ENCODE measurements at regions of chr20 and their contacts with region 1.

Region 1: DNA sequence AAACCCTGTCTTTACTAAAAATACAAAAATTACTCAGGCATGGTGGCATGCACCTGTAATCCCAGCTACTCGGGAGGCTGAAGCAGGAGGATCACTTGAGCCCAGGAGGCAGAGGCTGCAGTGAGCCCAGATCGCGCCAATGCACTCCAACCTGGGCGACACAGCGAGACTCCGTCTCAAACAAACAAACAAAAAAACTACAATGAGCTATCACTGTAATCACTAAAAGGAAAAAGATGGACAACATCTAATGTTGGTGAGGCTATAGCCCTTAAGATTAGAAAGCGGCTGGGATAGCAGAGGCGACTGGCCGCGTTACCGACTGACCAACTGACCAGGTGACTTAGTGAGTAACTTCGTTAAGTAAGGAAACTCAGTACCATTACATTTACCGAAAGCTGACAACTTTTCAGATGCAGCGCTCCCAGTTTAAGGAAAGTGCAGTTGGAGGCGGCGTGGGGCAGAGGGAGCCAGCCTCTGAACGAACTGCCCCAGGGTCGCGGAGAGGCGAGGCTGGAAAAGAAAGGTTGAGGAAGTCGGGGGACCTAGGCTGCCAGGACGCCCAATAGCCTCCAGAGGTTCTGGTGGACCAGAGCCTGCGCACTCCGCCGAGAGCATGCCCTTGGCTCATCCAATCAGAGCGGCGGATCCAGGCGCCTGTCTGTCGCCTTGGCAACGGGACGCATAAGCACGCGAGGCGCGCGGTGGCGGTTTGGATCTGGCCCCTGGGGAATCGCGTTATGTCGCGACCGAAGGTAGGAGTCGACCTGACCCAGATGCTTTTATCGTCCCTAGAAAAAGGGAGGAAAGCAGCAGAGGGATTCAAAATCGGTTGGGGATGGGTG is 8.9 kb downstream of the TTLL9 start:
- DNase-seq: peak; percentile 53 to 93 (median 66)
- ATAC-seq: peak; percentile 88
- H3K4me3 ChIP-seq: peak overlapping the region; percentile 69
- H3K4me3 Mint-ChIP-seq: peak overlapping the region; percentile 92
- H3K27ac ChIP-seq: no peak overlapping the region
- H3K27ac Mint-ChIP-seq: peak overlapping the region; percentile 48
- H3K4me1 ChIP-seq: peaks cover 15% of the 10 kb centered on the region
- H3K4me1 Mint-ChIP-seq: peaks cover 12% of the 10 kb centered on the region
- H3K27me3 ChIP-seq: peaks cover 0 to 1% of the 10 kb centered on the region in 2 experiments
- H3K27me3 Mint-ChIP-seq: peaks cover 18% of the 10 kb centered on the region
- CTCF ChIP-seq: no peak

Region 2: DNA sequence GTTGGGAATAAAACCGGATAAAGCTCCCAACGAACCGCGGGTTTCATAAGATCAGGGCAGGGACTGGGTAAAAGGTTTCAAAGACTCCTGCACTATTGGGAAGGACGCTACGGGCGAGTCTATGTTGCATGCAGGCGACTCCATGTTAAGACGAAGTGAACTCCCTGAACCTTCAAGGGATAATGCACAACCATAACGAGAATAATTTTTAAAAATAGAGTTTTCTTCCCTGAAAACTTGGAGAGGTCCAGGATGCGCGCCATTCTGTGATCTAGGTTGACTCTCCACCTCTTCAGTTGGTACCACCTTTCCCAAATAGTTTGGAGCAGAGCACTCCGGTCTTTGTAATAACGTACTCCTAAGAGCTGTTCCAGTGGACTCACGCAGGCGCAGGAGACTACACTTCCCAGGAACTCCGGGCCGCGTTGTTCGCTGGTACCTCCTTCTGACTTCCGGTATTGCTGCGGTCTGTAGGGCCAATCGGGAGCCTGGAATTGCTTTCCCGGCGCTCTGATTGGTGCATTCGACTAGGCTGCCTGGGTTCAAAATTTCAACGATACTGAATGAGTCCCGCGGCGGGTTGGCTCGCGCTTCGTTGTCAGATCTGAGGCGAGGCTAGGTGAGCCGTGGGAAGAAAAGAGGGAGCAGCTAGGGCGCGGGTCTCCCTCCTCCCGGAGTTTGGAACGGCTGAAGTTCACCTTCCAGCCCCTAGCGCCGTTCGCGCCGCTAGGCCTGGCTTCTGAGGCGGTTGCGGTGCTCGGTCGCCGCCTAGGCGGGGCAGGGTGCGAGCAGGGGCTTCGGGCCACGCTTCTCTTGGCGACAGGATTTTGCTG is 140.4 kb before region 1 on chr20 and contains the start of gene TPX2:
- CTCF ChIA-PET with region 1: no interaction called
- POLR2A ChIA-PET with region 1: no interaction called
- intact Hi-C with region 1: loop called in 1 of 2 experiments (anchors 10 kb)
- DNase-seq: peak; percentile 56 to 91 (median 78)
- ATAC-seq: peak; percentile 93
- H3K4me3 ChIP-seq: peak within 1 kb of the TSS; percentile 73
- H3K4me3 Mint-ChIP-seq: no peak within 1 kb of the TSS
- H3K27ac ChIP-seq: no peak within 1 kb of the TSS
- H3K27ac Mint-ChIP-seq: no peak within 1 kb of the TSS
- H3K4me1 ChIP-seq: peaks cover 18% of the 10 kb centered on the region
- H3K4me1 Mint-ChIP-seq: no peaks in the 10 kb centered on the region
- H3K27me3 ChIP-seq: no peaks in the 10 kb centered on the region
- H3K27me3 Mint-ChIP-seq: no peaks in the 10 kb centered on the region
- CTCF ChIP-seq: no peak
- total RNA-seq, gene TPX2: 0.85 to 0.89 TPM

Region 3: DNA sequence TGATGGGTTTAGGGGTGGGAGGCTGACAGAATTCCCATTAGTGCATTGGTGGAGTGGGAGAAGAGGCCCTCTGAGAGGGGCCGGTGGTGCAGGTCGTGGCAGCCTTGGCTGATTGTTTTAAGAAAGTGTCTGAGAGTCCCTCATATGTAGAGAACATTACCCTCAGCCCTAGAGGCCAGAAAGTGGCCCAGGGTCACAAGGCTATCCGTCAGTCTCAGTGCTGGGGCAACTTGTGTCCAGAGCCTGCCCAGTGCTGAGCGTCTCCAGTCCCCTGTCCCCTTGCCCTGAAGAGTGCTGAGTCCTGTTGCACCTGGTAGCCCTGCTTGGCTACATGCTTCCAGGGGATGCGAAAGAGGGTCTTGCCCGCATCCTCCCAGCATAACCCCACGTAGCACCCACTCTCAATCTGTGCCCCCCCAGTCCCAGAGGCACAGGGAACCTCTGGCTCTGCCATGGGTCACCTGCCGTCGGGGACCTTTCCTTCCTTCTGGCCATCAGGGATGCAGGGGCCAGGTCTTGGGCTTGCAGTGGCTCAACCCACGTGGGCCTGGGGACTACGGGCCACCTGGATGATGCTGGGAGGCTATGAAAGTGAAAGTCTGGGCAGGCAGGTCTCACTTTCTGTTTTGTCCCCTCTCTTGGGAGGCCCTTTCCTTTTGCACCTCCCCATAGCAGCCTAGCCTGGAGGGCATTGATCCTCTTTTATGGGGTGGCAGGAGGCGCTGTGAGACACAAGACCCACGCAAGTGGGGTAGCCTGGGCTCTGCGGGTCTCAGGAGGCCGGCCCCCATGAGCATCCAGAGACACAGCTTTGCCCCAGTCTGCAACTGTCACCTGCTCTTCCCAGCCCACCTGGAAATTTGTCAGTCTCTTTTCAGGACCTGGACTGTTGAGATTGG is 21.3 kb before region 1 on chr20:
- CTCF ChIA-PET with region 1: no interaction called
- POLR2A ChIA-PET with region 1: no interaction called
- intact Hi-C with region 1: no loop called
- DNase-seq: no peak
- ATAC-seq: no peak
- H3K4me3 ChIP-seq: no peak overlapping the region
- H3K4me3 Mint-ChIP-seq: peak overlapping the region; percentile 32
- H3K27ac ChIP-seq: no peak overlapping the region
- H3K27ac Mint-ChIP-seq: no peak overlapping the region
- H3K4me1 ChIP-seq: peaks cover 22% of the 10 kb centered on the region
- H3K4me1 Mint-ChIP-seq: peaks cover 13% of the 10 kb centered on the region
- H3K27me3 ChIP-seq: peaks cover 48 to 51% of the 10 kb centered on the region in 2 experiments
- H3K27me3 Mint-ChIP-seq: peaks cover 7% of the 10 kb centered on the region
- CTCF ChIP-seq: no peak

Region 4: GRCh38 chr20:31894980-31895675 is 15.8 kb after region 1 on chr20:
- CTCF ChIA-PET with region 1: no interaction called
- POLR2A ChIA-PET with region 1: no interaction called
- intact Hi-C with region 1: no loop called
- DNase-seq: peak in 4 of 14 experiments; percentile 4 to 69 (median 58)
- ATAC-seq: peak; percentile 73
- H3K4me3 ChIP-seq: no peak overlapping the region
- H3K4me3 Mint-ChIP-seq: no peak overlapping the region
- H3K27ac ChIP-seq: no peak overlapping the region
- H3K27ac Mint-ChIP-seq: no peak overlapping the region
- H3K4me1 ChIP-seq: no peaks in the 10 kb centered on the region
- H3K4me1 Mint-ChIP-seq: no peaks in the 10 kb centered on the region
- H3K27me3 ChIP-seq: no peaks in the 10 kb centered on the region
- H3K27me3 Mint-ChIP-seq: peaks cover 38% of the 10 kb centered on the region
- CTCF ChIP-seq: no peak

Region 5: DNA sequence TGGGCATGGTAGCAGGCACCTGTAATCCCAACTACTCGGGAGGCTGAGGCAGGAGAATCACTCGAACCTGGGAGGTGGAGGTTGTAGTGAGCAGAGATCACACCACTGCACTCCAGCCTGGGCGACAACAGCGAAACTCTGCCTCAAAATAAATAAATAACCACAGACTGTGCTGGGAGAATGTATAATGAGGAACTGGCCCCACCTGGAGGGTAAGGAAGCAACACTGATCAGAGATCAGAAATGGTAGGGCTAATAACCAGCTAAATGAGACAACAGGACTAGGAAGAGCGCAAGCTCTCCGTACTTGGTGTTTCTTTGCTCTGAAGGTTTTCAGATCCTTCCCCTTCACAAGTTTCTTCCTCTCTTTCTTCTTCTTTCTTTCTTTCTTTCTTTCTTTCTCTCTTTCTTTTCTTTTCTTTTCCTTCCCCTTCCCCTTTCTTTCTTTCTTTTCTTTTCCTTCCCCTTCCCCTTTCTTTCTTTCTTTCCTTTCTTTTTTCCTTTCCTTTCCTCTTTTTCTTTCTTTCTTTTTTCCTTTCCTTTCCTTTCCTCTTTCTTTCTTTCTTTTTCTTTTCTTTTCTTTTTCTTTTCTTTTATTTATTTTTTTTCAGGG is 145.4 kb after region 1 on chr20:
- CTCF ChIA-PET with region 1: no interaction called
- POLR2A ChIA-PET with region 1: no interaction called
- intact Hi-C with region 1: loop called in 1 of 2 experiments (anchors 5 kb)
- DNase-seq: no peak
- ATAC-seq: no peak
- H3K4me3 ChIP-seq: no peak overlapping the region
- H3K4me3 Mint-ChIP-seq: no peak overlapping the region
- H3K27ac ChIP-seq: no peak overlapping the region
- H3K27ac Mint-ChIP-seq: no peak overlapping the region
- H3K4me1 ChIP-seq: peaks cover 3% of the 10 kb centered on the region
- H3K4me1 Mint-ChIP-seq: peaks cover 8% of the 10 kb centered on the region
- H3K27me3 ChIP-seq: peaks cover 15 to 29% of the 10 kb centered on the region in 2 experiments
- H3K27me3 Mint-ChIP-seq: peaks cover 65% of the 10 kb centered on the region
- CTCF ChIP-seq: no peak

Region 6: GRCh38 chr20:32302507-32302872 is 423.1 kb after region 1 on chr20:
- CTCF ChIA-PET with region 1: no interaction called
- POLR2A ChIA-PET with region 1: no interaction called
- intact Hi-C with region 1: no loop called
- DNase-seq: no peak
- ATAC-seq: no peak
- H3K4me3 ChIP-seq: no peak overlapping the region
- H3K4me3 Mint-ChIP-seq: no peak overlapping the region
- H3K27ac ChIP-seq: no peak overlapping the region
- H3K27ac Mint-ChIP-seq: no peak overlapping the region
- H3K4me1 ChIP-seq: no peaks in the 10 kb centered on the region
- H3K4me1 Mint-ChIP-seq: peaks cover 23% of the 10 kb centered on the region
- H3K27me3 ChIP-seq: no peaks in the 10 kb centered on the region
- H3K27me3 Mint-ChIP-seq: no peaks in the 10 kb centered on the region
- CTCF ChIP-seq: no peak

Measured in CD4-positive, alpha-beta T cell (primary cell).